ENCODE measurements at regions of chr1 and their contacts with region 1.

Region 1: GRCh38 chr1:83102630-83103071 is 896.3 kb downstream of the TTLL7 start:
- ATAC-seq: peak; percentile 62 to 96 (median 93)
- H3K4me3 ChIP-seq: no peak overlapping the region
- H3K27ac ChIP-seq: no peak overlapping the region
- H3K4me1 ChIP-seq: peaks cover 11 to 15% of the 10 kb centered on the region in 2 donors

Region 2: GRCh38 chr1:83017701-83018100 is 85.0 kb before region 1 on chr1:
- in situ Hi-C with region 1: loop called in 1 of 9 experiments (anchors 25 kb)
- ATAC-seq: no peak
- H3K4me3 ChIP-seq: no peak overlapping the region
- H3K27ac ChIP-seq: no peak overlapping the region
- H3K4me1 ChIP-seq: peaks cover 0 to 18% of the 10 kb centered on the region in 2 donors

Region 3: DNA sequence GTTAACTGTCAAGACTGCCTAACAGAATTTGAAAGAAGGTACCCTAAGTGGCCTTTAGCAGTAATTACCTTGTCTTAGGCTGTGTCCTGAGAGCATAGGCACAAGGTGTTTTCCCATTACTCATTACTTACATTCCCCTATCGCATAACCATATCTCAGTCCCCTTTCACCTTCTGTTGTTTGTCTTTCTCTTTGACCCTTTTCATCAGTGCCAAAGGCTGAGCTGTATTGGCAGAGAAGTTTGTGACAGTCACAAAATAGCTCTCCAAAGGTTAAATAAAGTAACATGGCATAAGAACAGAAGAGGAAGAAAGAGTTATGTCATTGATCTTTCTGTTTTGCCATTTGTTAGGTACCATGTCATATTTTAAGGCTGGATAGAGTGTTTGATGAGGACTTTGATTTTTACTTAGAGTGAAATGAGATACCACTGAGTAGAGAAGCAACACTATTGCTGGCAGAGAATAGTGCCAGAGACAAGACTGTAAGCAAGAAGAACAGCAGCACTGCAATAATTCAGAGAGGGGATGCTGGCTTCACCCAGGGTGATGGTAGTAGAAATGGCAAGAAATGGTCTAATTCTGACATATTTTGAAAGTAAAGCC is 398.4 kb after region 1 on chr1:
- in situ Hi-C with region 1: no loop called
- ATAC-seq: no peak
- H3K4me3 ChIP-seq: no peak overlapping the region
- H3K27ac ChIP-seq: no peak overlapping the region
- H3K4me1 ChIP-seq: no peaks in the 10 kb centered on the region